ENCODE measurements at regions of chr19 and their contacts with region 1.

Region 1: GRCh38 chr19:52570000-52570861 is at the start of gene ZNF701:
- DNase-seq: peak; percentile 95 to 97
- ATAC-seq: peak; percentile 100
- H3K4me3 ChIP-seq: peak within 1 kb of the TSS; percentile 87
- H3K27ac ChIP-seq: peak within 1 kb of the TSS; percentile 78
- H3K4me1 ChIP-seq: no peaks in the 10 kb centered on the region
- H3K27me3 ChIP-seq: no peaks in the 10 kb centered on the region
- CTCF ChIP-seq: peak; percentile 32
- total RNA-seq, gene ZNF701: 4.5 to 10.3 (median 7.9) TPM

Region 2: DNA sequence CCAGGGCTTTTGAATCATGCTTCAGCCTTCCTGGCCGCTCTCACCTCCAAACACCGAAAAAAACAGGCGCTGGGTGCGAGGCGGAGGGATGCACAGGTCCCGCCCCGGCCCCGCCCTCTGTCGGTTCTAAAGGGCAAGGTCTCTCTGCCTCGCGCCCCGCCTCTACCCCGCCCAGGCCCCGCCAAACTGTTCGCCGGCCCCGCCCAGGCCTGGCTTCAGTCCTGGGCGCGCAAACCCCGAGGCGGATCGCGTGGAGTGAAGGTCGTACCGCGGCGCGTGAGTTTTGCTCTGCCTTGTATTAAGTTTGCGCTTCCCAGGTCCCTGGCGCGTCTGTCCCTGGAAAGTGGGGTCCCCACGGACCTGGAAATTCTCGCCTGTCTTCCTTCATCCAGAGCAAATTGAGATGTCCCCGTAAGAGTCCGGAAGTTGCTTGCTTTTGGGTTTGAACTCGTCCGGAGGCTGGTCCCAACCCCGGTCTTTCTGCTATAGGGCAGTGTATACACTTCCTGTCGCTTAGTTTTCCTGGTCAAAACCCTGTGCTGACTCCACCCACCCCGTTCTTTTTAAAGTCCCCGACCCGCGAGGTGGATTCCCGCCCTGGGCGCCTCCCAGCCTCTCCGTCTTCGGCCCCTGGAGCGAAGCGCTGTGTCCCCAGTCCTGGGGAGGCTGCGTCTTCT is 34.3 kb before region 1 on chr19:
- intact Hi-C with region 1: loop called in 1 of 2 experiments (anchors 5 kb)
- DNase-seq: peak; percentile 91 to 93
- ATAC-seq: peak; percentile 90 to 93 (median 92)
- H3K4me3 ChIP-seq: peak overlapping the region; percentile 62
- H3K27ac ChIP-seq: peak overlapping the region; percentile 70
- H3K4me1 ChIP-seq: peaks cover 12% of the 10 kb centered on the region
- H3K27me3 ChIP-seq: no peaks in the 10 kb centered on the region
- CTCF ChIP-seq: peak; percentile 27

Region 3: DNA sequence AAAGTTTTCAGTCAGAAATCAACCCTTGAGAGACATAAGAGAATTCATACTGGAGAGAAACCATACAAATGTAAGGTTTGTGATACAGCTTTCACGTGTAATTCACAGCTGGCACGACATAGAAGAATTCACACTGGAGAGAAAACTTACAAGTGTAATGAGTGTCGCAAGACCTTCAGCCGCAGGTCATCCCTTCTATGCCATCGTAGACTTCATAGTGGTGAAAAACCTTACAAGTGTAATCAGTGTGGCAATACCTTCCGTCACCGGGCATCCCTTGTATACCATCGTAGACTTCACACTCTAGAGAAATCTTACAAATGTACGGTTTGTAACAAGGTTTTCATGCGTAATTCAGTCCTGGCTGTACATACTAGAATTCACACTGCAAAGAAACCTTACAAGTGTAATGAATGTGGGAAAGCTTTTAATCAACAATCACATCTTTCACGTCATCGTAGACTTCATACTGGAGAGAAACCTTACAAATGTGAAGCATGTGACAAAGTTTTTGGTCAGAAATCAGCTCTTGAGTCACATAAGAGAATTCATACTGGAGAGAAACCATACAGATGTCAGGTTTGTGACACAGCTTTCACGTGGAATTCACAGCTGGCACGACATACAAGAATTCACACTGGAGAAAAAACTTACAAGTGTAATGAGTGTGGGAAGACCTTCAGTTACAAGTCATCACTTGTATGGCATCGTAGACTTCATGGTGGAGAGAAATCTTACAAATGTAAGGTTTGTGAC is 15.8 kb before region 1 on chr19:
- intact Hi-C with region 1: no loop called
- DNase-seq: no peak
- ATAC-seq: no peak
- H3K4me3 ChIP-seq: no peak overlapping the region
- H3K27ac ChIP-seq: no peak overlapping the region
- H3K4me1 ChIP-seq: no peaks in the 10 kb centered on the region
- H3K27me3 ChIP-seq: no peaks in the 10 kb centered on the region
- CTCF ChIP-seq: no peak

Measured in psoas muscle (tissue), 8 donors.